Activated CD4-positive, alpha-beta memory T cell treated with anti-CD3 and anti-CD28 coated beads for 36 hours (primary cell): ENCODE measurements at regions of chr12 and their contacts with region 1.

Region 1: DNA sequence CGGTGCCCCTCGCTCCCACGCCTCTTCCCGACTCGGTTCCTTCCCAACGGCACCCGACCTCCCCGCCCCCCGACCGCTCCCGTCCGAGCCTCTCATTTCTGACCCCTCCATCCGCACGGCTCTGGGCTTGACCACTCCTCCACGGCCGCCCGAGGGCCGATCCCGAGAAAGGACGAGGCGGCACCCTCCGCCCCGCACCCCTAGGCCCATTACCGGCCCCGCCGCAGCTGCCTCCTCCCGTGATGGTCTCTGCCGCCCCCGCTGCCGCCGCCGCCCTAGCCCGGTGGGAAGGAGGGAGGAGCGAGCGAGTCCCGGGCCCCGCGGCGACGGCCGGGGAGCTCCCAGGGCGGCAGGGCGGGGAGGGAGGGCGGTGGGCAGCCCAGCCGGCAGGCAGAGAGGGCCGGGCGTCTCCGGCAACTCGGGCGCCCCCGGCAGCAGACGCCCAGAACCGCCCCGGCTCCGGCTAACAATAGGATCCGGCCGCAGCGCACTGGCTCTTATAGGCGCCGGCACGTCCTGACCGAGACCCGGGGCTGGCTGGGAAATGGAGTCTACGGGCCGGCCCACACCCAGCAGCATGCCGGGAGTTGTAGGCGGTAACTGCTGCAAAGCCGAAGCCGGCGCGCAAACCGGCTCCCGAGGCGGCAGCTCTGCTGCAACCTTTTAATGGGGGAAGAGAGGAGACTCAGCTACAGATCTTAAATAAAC is at the start of gene CSRNP2:
- DNase-seq: peak; percentile 97
- H3K4me3 Mint-ChIP-seq: peak within 1 kb of the TSS; percentile 91
- H3K27ac Mint-ChIP-seq: peak within 1 kb of the TSS; percentile 83
- H3K4me1 Mint-ChIP-seq: peaks cover 46% of the 10 kb centered on the region
- H3K27me3 Mint-ChIP-seq: no peaks in the 10 kb centered on the region
- total RNA-seq, gene CSRNP2: 19.2 to 20.2 TPM

Region 2: GRCh38 chr12:51172515-51173431 is 89.5 kb after region 1 on chr12 and contains the start of gene TFCP2:
- CTCF ChIA-PET with region 1: no interaction called
- POLR2A ChIA-PET with region 1: no interaction called
- intact Hi-C with region 1: loop called (anchors 1 kb)
- DNase-seq: peak; percentile 96
- H3K4me3 Mint-ChIP-seq: peak within 1 kb of the TSS; percentile 63
- H3K27ac Mint-ChIP-seq: no peak within 1 kb of the TSS
- H3K4me1 Mint-ChIP-seq: peaks cover 9% of the 10 kb centered on the region
- H3K27me3 Mint-ChIP-seq: no peaks in the 10 kb centered on the region
- total RNA-seq, gene TFCP2: 32.0 to 34.1 TPM

Region 3: GRCh38 chr12:51238510-51239334 is 155.4 kb after region 1 on chr12 and contains the start of gene DAZAP2:
- CTCF ChIA-PET with region 1: no interaction called
- POLR2A ChIA-PET with region 1: interaction called, 5 read pairs
- intact Hi-C with region 1: loop called (anchors 2 kb)
- DNase-seq: peak; percentile 97
- H3K4me3 Mint-ChIP-seq: peak within 1 kb of the TSS; percentile 94
- H3K27ac Mint-ChIP-seq: peak within 1 kb of the TSS; percentile 98
- H3K4me1 Mint-ChIP-seq: peaks cover 33% of the 10 kb centered on the region
- H3K27me3 Mint-ChIP-seq: no peaks in the 10 kb centered on the region
- total RNA-seq, gene DAZAP2: 106 to 119 TPM

Region 4: GRCh38 chr12:51326762-51327439 is 243.6 kb after region 1 on chr12:
- CTCF ChIA-PET with region 1: no interaction called
- POLR2A ChIA-PET with region 1: interaction called, 4 read pairs
- intact Hi-C with region 1: loop called (anchors 5 kb)
- DNase-seq: no peak
- H3K4me3 Mint-ChIP-seq: peak overlapping the region; percentile 52
- H3K27ac Mint-ChIP-seq: peak overlapping the region; percentile 90
- H3K4me1 Mint-ChIP-seq: peaks cover 64% of the 10 kb centered on the region
- H3K27me3 Mint-ChIP-seq: no peaks in the 10 kb centered on the region